ENCODE measurements at regions of chr5 and their contacts with region 1.

Region 1: GRCh38 chr5:39714036-39714698 is 289.4 kb upstream of the DAB2 start:
- DNase-seq: no peak
- H3K4me3 ChIP-seq: no peak overlapping the region
- CTCF ChIP-seq: peak; percentile 65

Region 2: DNA sequence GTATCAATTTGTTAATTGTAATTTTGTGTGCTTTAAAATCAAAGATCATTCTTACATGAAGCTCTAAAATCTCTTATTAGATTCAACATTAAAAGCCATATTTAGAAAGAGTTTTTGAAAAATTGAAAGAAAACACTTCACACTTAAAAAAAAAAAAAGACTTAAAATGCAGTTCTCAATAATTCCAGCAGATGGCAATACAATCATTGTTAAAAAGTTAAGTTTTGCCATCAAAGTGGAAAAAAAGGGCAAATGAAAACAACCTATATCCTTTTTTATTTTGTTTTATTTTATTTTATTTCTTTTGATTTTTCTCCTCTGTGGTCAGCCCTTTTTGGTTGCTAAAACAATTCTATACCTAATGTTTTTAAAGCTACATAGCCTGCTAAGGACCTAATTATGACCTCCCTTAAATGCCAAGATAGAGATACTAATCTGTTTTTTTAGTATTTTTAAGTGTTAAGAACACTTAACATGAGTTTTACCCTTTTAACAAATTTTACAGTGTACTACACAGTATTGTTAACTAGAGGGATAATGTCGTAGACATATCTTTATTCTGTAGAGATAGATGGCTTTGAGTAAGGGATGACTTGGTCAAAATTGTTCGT is 135.2 kb before region 1 on chr5:
- CTCF ChIA-PET with region 1: interaction called, 19 read pairs
- POLR2A ChIA-PET with region 1: no interaction called
- DNase-seq: no peak
- H3K4me3 ChIP-seq: no peak overlapping the region
- CTCF ChIP-seq: no peak

Region 3: GRCh38 chr5:39732166-39732565 is 18.0 kb after region 1 on chr5:
- CTCF ChIA-PET with region 1: interaction called, 13 read pairs
- POLR2A ChIA-PET with region 1: no interaction called
- DNase-seq: no peak
- H3K4me3 ChIP-seq: no peak overlapping the region
- CTCF ChIP-seq: no peak

Region 4: GRCh38 chr5:39948867-39949468 is 234.8 kb after region 1 on chr5:
- CTCF ChIA-PET with region 1: interaction called, 65 read pairs
- POLR2A ChIA-PET with region 1: no interaction called
- DNase-seq: peak; percentile 19
- H3K4me3 ChIP-seq: no peak overlapping the region
- CTCF ChIP-seq: peak; percentile 46

Region 5: DNA sequence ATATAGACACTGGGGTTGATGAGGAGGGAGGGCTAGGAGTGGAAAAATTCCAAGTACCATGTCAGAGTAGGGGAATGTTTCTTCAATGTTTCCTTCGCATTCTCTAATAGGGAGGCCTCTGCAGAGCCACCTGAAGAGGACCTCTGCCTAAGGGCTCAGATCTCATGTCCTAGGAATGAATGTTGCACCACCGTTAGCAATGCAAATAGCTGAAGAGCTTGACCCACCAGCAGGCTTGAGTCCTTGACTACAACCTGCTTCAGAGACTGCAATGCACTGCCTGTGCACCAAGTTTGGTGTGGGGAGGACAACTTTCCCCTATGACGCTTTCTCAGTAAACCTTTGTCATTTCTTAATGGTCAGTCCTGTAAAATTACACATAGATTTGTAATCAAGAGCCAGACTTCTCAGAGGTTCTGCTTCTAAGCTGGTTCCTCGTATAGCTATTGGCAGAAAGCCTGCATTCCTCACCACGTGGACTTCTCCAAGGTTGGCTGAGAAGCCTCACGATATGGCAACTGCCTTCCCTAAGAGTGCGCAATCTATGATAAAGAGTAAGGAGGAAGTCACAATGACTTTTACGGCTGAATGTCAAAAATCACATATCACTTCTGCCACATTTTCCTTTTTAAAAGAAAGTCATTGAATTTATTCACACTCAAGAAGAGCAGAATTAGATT is 364.9 kb after region 1 on chr5:
- CTCF ChIA-PET with region 1: no interaction called
- POLR2A ChIA-PET with region 1: no interaction called
- DNase-seq: no peak
- H3K4me3 ChIP-seq: no peak overlapping the region
- CTCF ChIP-seq: no peak

Region 6: GRCh38 chr5:40736103-40736875 is 1022.1 kb after region 1 on chr5:
- CTCF ChIA-PET with region 1: interaction called, 76 read pairs
- POLR2A ChIA-PET with region 1: no interaction called
- DNase-seq: no peak
- H3K4me3 ChIP-seq: no peak overlapping the region
- CTCF ChIP-seq: peak; percentile 52

Measured in AG04449 (cell line).